ENCODE measurements at regions of chr12 and their contacts with region 1.

Region 1: GRCh38 chr12:29282031-29282816 is 98.7 kb downstream of the ERGIC2 start:
- DNase-seq: peak; percentile 91 to 97 (median 95)
- H3K4me3 ChIP-seq: peak overlapping the region in 5 of 7 experiments; percentile 24 to 57 (median 56)
- H3K27ac ChIP-seq: peak overlapping the region; percentile 65 to 77
- H3K4me1 ChIP-seq: peaks cover 13 to 60% (median 33%) of the 10 kb centered on the region in 4 experiments
- H3K27me3 ChIP-seq: no peaks in the 10 kb centered on the region

Region 2: DNA sequence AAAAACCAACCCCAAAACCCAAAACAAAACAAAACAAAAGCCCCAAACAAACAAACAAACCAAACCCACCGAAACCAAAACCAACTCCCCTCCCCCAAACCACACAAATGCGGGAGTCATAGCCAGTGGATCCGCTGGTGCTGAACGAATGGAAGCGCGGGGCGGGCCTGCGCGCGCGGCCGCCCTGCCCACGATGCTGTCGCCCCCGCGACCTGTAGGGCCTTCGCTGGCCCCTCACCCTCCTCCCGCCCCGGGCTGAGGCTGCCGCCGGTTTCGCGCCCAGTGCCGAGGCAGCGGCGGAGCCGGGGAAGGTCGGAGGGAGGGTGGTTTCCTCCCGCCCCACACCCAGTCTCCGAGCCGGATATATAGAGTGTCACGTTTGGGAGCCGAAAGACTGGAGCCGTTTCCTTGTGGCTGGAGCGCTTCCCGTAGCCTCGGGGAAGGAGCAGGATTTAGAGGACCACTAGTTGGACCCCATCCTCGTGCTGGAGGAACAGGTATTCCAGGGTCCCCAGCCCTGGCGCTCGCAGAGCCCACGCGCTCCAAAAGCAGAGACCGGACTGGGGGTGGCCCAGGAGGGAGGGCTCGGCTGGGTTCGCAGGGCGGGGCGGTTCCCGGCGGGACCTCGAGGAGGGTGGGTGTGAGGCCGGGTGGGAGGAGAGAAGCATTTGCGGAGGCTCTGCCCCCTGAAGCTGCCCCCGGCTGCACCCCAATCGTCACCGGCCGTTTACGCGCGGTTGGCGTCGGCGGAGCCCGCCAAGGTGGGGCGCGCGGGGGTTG is 133.1 kb before region 1 on chr12 and contains the start of gene FAR2:
- CTCF ChIA-PET with region 1: interaction called, 4 read pairs
- POLR2A ChIA-PET with region 1: interaction called, 11 read pairs
- DNase-seq: peak; percentile 71 to 93 (median 91)
- H3K4me3 ChIP-seq: peak within 1 kb of the TSS; percentile 57 to 96 (median 90)
- H3K27ac ChIP-seq: peak within 1 kb of the TSS; percentile 93 to 96
- H3K4me1 ChIP-seq: peaks cover 40 to 63% (median 56%) of the 10 kb centered on the region in 4 experiments
- H3K27me3 ChIP-seq: no peaks in the 10 kb centered on the region

Region 3: DNA sequence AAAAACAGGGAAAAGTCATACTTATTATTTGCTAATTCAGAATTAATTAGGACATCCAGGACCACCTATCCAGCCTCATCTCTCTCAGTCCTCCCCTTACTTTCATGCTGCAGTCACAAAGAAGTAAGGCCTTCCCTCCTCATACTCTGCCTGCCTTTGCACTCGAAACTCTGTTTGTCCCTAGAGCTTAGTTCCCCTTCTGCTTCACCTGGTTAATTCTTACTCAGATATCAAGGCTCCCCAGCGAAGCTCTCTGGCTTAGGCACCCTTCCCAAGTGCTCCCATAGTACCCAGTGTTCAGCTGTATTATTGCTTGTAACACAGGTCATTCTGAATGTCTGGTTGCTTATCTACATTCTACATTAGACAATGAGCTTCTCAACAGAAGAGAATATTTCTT is 17.4 kb after region 1 on chr12:
- CTCF ChIA-PET with region 1: interaction called, 43 read pairs
- POLR2A ChIA-PET with region 1: no interaction called
- DNase-seq: peak in 2 of 3 donors; percentile 45 to 51
- H3K4me3 ChIP-seq: peak overlapping the region in 1 of 7 experiments; percentile 11
- H3K27ac ChIP-seq: no peak overlapping the region
- H3K4me1 ChIP-seq: peaks cover 0 to 12% (median 6%) of the 10 kb centered on the region in 4 experiments
- H3K27me3 ChIP-seq: no peaks in the 10 kb centered on the region

Region 4: DNA sequence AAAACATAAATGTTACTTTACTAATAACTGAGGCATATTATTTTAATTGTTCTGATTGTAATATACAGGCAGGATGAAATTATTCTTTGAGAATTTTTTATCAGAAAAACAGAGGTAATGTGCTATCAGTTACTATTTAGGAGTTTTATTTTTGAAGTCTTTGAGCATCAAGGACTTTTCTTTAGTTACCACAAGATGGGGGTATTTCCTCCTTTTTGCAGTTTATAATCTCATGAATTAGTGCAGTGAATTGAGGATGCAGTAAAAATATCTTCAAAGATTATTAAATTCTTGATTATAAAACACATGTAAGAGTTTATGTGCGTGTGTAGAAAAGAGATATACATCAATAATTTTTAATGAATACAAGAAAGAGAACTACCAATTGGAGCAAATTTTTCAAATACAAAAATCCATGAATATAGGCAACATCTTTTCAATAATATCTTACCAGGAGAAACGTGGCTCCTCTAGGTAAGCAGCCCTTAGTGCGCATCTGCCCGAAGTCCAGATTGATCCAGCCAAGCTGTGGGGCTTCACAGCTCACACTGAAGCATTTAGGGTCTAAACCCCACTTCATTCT is 27.2 kb after region 1 on chr12:
- CTCF ChIA-PET with region 1: interaction called, 43 read pairs
- POLR2A ChIA-PET with region 1: no interaction called
- DNase-seq: peak; percentile 39 to 64 (median 54)
- H3K4me3 ChIP-seq: no peak overlapping the region
- H3K27ac ChIP-seq: no peak overlapping the region
- H3K4me1 ChIP-seq: peaks cover 0 to 30% (median 4%) of the 10 kb centered on the region in 4 experiments
- H3K27me3 ChIP-seq: no peaks in the 10 kb centered on the region